HepG2 (cell line): ENCODE measurements at regions of chr12 and their contacts with region 1.

Region 1: DNA sequence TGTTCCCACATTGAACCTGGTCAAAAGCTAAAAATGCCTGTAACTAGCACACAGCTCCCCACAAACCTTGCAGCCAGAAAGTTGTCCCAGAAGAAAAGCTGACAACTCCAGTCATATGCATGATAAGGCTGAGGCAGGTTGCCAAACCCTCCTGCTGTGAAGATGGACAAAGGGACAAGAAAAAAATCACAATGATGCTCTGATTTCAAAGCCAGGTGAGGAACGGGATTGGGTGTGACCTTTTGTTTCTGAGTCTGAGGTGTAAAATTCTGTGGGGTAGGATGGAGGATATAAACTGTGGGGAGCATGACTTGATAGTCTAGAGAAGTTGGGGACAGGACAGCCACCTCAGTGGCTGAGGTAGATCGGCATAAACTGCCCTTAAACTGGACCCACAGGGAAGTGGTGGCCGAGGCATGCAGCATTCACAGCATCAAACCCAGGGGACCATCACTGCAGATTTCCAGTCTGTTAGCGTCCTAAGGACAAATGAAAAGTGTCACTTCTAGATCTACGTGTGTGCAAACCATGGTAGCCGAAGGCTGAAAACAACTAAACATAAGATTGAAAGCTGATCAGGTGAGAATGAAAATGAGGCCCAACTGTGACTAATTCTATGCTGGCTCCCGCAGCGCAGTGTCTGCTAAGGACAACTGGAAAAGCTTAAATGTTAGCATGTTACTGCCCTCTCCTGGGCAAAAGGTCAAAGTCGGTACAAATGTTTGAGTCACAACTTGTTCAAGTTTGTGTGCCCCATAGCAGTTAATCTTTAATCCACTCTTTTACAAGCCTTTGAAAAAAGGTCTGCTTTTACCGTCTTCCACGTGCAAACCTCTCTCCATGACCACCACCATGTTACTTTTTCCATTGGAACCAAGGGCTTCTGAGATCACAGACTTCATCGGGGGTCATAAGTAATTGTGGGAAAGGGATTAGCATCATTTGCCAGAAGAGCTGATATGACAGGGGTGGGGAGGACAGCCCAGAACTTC is 39.8 kb downstream of the GRIN2B start:
- DNase-seq: peak; percentile 76
- ATAC-seq: peak; percentile 99
- H3K4me3 ChIP-seq: no peak overlapping the region
- H3K27ac ChIP-seq: no peak overlapping the region
- H3K4me1 ChIP-seq: peaks cover 10% of the 10 kb centered on the region
- H3K27me3 ChIP-seq: no peaks in the 10 kb centered on the region; a peak in 1 of 5 replicates
- CTCF ChIP-seq: peak; percentile 82
- EP300 ChIP-seq: no peak
- POLR2A ChIP-seq: no peak
- RAD21 ChIP-seq: peak; percentile 57

Region 2: DNA sequence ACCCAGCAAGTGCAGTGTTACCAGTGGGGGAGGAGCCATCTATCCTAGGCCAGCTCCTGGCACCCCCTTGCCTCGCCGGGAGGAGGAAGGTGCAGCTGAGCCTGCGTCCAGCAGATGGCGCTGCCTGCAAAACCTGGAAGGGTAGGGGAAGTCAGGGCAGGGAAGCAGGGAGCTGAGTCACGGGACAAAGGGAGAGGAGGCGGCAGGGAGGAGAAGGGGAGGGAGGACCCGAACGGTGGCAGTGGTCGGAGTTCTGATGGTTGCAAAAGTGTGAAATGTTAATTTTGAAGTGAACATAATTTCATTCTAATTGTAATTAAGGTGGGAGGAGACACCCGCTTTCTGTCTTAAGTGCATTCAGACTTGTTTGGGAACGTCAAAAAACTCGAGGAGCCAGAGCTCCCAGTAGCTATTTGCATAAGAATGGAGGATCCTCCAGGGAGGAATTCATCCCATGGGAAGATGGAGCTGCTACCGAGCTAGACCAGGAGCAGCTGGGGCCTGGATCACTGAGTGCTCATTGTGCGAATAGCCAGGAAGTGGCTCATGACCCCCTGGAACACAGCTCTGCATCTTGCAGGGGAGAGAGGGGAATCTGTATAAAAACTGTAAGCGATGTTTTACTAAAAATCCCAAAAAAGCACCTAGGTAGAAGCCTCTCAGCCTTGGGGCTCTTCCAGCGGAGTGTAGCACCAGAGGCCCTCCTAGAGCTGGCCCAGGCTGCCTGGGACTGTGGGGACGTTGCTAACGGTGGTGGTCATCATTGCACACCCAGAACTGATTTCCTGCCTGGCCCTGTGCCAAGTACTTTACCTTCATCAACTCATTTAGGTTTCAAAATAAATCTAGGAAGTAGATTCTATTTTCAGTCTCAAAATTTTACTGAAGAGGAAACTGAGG is 685.5 kb before region 1 on chr12:
- CTCF ChIA-PET with region 1: no interaction called
- POLR2A ChIA-PET with region 1: no interaction called
- in situ Hi-C with region 1: no loop called
- intact Hi-C with region 1: loop called (anchors 5 kb)
- DNase-seq: peak; percentile 83
- ATAC-seq: peak; percentile 100
- H3K4me3 ChIP-seq: no peak overlapping the region
- H3K27ac ChIP-seq: no peak overlapping the region
- H3K4me1 ChIP-seq: no peaks in the 10 kb centered on the region; the same call in 1 of the 2 replicates
- H3K27me3 ChIP-seq: no peaks in the 10 kb centered on the region; a peak in 1 of 5 replicates
- CTCF ChIP-seq: peak; percentile 96
- EP300 ChIP-seq: no peak
- POLR2A ChIP-seq: no peak
- RAD21 ChIP-seq: peak; percentile 63; the same call in 1 of the 2 replicates

Region 3: DNA sequence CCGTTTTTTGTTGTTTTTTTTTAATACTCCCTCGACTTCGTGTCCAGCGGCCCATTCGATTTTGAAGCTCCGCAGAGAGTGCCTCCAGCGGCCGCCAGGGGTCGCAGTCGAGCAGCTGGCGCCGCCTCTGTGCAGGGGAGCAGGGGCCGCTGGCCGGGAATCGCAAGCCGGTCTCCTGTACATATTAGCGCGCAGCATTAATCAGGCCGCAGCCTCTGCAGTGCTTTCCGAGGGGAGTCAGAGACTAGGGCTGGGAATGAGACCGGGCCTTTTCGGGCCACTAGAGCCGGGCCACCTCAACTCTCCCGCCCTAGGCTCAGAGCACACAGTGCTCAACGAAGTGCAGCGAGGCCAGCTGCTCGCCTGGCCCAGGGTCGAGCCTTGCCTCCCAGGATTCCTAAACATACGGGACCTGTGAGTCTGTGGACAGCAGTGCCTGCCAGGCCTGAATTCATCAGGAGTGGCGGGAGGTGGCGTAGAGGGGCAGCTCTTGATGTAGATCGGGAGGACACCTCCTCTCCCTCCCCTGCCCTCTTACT is 663.2 kb before region 1 on chr12:
- CTCF ChIA-PET with region 1: interaction called, 4 read pairs
- POLR2A ChIA-PET with region 1: no interaction called
- in situ Hi-C with region 1: no loop called
- intact Hi-C with region 1: loop called (anchors 1 kb)
- DNase-seq: peak; percentile 26
- ATAC-seq: peak; percentile 99
- H3K4me3 ChIP-seq: peak overlapping the region in 1 of 3 experiments; percentile 34; a peak in 1 of 6 replicates
- H3K27ac ChIP-seq: no peak overlapping the region
- H3K4me1 ChIP-seq: no peaks in the 10 kb centered on the region
- H3K27me3 ChIP-seq: peaks cover 7 to 44% of the 10 kb centered on the region in 2 experiments; a peak in 3 of 5 replicates
- CTCF ChIP-seq: peak; percentile 88
- EP300 ChIP-seq: no peak
- POLR2A ChIP-seq: no peak
- RAD21 ChIP-seq: peak; percentile 43; the same call in 1 of the 2 replicates

Region 4: GRCh38 chr12:13727707-13728195 is 213.8 kb before region 1 on chr12:
- CTCF ChIA-PET with region 1: no interaction called
- POLR2A ChIA-PET with region 1: no interaction called
- in situ Hi-C with region 1: loop called (anchors 25 kb)
- intact Hi-C with region 1: no loop called
- DNase-seq: no peak
- ATAC-seq: no peak
- H3K4me3 ChIP-seq: no peak overlapping the region
- H3K27ac ChIP-seq: no peak overlapping the region
- H3K4me1 ChIP-seq: no peaks in the 10 kb centered on the region
- H3K27me3 ChIP-seq: no peaks in the 10 kb centered on the region
- CTCF ChIP-seq: no peak
- EP300 ChIP-seq: no peak
- POLR2A ChIP-seq: no peak
- RAD21 ChIP-seq: no peak

Region 5: DNA sequence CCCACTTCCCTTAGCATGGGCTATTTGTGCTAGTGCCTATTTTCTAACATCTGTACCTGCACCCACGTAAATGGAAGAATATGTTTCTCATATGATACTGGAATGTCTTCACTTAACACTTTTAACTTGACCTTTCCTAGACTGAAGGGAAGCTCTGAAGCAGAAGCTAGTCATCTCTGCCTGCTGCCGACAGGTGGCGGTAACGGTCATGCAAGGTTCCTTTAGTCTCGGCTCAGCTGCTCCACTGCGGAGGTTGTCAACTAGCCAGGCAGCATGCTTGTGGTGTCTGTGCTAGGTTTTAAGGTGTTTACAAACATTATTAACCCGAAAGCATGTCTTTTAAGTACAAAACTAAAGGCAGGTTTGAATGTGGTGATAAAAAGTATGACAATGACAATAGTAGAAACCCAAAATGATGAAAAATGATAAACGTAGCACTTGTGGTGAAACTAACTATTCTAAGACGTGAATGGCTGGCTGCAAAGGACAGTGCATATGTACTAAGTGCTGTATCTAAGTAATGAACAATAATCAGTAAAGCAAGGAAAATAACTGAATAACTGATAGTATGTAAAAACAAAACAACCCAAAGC is 77.4 kb before region 1 on chr12:
- CTCF ChIA-PET with region 1: interaction called, 28 read pairs
- POLR2A ChIA-PET with region 1: no interaction called
- in situ Hi-C with region 1: loop called (anchors 5 kb)
- intact Hi-C with region 1: loop called (anchors 1 kb)
- DNase-seq: peak; percentile 48
- ATAC-seq: peak; percentile 94
- H3K4me3 ChIP-seq: no peak overlapping the region
- H3K27ac ChIP-seq: no peak overlapping the region
- H3K4me1 ChIP-seq: no peaks in the 10 kb centered on the region
- H3K27me3 ChIP-seq: no peaks in the 10 kb centered on the region
- CTCF ChIP-seq: peak; percentile 90
- EP300 ChIP-seq: no peak
- POLR2A ChIP-seq: no peak
- RAD21 ChIP-seq: 0 out of 2 replicates have a peak, but pooled peaks have one; percentile 45